ENCODE measurements at regions of chr15 and their contacts with region 1.

Region 1: GRCh38 chr15:25795061-25795460 is 68.1 kb downstream of the ATP10A start:
- H3K4me3 ChIP-seq: no peak overlapping the region
- H3K27ac ChIP-seq: no peak overlapping the region
- H3K4me1 ChIP-seq: no peaks in the 10 kb centered on the region
- CTCF ChIP-seq: no peak

Region 2: DNA sequence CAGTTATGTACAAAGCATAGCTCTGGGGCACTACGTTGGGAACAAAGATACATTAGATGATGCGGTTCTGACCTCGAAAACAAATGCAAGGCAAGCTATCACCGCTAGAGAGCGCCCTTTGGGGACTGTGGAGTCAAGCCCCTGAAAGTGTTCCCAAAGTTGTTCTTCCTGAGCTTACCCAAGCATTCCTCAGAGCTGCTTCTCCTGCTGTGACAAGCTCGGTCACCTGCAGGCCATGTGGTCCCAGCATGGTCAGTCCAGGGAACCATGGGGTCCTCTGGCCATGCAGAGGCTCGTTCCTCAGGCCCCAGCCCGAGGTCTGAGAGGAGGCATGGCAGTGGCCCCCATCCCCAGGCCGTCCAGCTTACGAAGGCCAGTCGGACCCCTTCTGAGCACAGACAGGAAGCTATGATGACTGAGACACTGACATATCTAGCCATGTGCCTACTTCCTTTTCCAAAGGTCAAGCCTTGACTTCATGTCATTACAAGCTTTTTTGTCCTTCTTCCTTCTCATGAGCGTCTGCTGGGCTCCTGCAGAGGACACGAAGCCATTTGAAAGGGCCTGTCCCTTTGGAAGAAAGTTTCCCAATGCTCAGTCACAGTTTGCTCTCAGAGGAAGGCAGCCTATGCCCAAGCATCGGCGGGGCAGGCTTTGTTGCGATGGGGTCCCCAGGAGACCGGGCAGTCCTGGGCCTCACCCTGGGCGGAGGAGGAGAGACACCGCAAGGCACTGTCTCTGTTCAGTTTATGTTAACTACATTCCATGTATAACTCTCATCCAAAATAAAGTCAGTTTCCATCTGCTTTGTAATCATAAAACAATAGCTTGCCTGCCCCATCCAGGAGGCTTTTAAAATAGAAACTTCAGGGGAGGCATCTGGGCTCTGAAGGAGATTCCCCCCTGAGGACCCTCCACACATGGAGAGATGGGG is 11.2 kb before region 1 on chr15:
- CTCF ChIA-PET with region 1: interaction called, 11 read pairs
- POLR2A ChIA-PET with region 1: no interaction called
- H3K4me3 ChIP-seq: no peak overlapping the region
- H3K27ac ChIP-seq: no peak overlapping the region
- H3K4me1 ChIP-seq: no peaks in the 10 kb centered on the region
- CTCF ChIP-seq: no peak